ENCODE measurements at regions of chr15 and their contacts with region 1.

Region 1: GRCh38 chr15:70569091-70569621 is 194.2 kb downstream of the UACA start:
- DNase-seq: peak; percentile 71
- H3K4me3 ChIP-seq: no peak overlapping the region
- H3K27ac ChIP-seq: no peak overlapping the region
- H3K4me1 ChIP-seq: no peaks in the 10 kb centered on the region
- H3K27me3 ChIP-seq: peaks cover 2 to 5% of the 10 kb centered on the region in 2 experiments
- CTCF ChIP-seq: peak; percentile 55 to 77
- POLR2A ChIP-seq: no peak

Region 2: DNA sequence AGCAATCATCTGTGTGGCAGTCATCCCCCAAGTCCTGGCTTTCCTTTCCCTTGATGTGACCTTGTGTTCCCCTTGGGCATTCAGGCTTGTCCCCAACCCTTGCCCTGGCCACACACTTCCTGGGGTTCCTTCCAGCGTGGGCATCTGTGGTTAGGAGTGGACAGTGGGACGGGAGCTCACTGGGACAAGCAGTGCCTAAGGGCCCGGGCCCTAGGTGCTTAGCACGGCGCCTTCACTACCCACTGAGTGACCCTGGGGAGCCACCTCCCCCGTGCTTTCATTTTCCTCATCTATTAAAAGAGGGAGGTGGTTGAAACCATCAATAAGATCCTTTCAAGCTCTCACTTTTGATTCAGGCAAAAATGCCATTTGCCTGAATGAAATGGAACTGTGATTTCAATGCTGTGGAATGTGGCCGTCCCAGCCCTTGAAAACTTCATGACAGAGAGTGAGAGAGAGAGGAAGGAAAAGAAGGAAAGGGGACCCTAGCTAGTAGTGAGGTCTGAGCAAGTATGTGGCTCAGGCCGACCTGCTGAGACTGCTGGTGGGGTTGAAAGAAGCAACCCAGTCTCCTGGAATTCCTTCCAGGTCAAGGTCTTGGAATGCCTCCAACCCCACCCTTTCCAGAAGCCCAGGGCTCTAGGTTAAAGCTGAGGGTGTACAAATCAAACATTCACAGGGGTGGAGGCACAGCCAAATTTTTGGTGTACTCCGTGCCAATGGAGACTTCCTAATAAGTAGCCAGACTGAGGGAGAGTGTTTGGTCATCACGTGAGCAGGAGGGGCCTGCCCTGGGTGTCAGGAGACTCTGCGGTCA is 774.3 kb before region 1 on chr15:
- CTCF ChIA-PET with region 1: no interaction called
- POLR2A ChIA-PET with region 1: no interaction called
- dilution Hi-C with region 1: no loop called
- intact Hi-C with region 1: no loop called
- DNase-seq: no peak
- H3K4me3 ChIP-seq: no peak overlapping the region
- H3K27ac ChIP-seq: no peak overlapping the region
- H3K4me1 ChIP-seq: peaks cover 11% of the 10 kb centered on the region
- H3K27me3 ChIP-seq: no peaks in the 10 kb centered on the region
- CTCF ChIP-seq: no peak
- POLR2A ChIP-seq: no peak

Region 3: GRCh38 chr15:70584838-70585706 is 15.9 kb after region 1 on chr15:
- CTCF ChIA-PET with region 1: interaction called, 15 read pairs
- POLR2A ChIA-PET with region 1: no interaction called
- dilution Hi-C with region 1: no loop called
- intact Hi-C with region 1: no loop called
- DNase-seq: no peak
- H3K4me3 ChIP-seq: no peak overlapping the region
- H3K27ac ChIP-seq: no peak overlapping the region
- H3K4me1 ChIP-seq: no peaks in the 10 kb centered on the region
- H3K27me3 ChIP-seq: peaks cover 15 to 27% of the 10 kb centered on the region in 2 experiments
- CTCF ChIP-seq: peak; percentile 56 to 58
- POLR2A ChIP-seq: no peak

Region 4: GRCh38 chr15:70636540-70637165 is 67.5 kb after region 1 on chr15:
- CTCF ChIA-PET with region 1: interaction called, 61 read pairs
- POLR2A ChIA-PET with region 1: no interaction called
- dilution Hi-C with region 1: no loop called
- intact Hi-C with region 1: loop called (anchors 5 kb)
- DNase-seq: peak; percentile 28
- H3K4me3 ChIP-seq: no peak overlapping the region
- H3K27ac ChIP-seq: no peak overlapping the region
- H3K4me1 ChIP-seq: no peaks in the 10 kb centered on the region
- H3K27me3 ChIP-seq: peaks cover 2 to 5% of the 10 kb centered on the region in 2 experiments
- CTCF ChIP-seq: peak; percentile 5 to 27
- POLR2A ChIP-seq: no peak

Region 5: GRCh38 chr15:70650567-70651302 is 81.6 kb after region 1 on chr15:
- CTCF ChIA-PET with region 1: interaction called, 15 read pairs
- POLR2A ChIA-PET with region 1: no interaction called
- dilution Hi-C with region 1: no loop called
- intact Hi-C with region 1: loop called (anchors 5 kb)
- DNase-seq: peak; percentile 96
- H3K4me3 ChIP-seq: no peak overlapping the region
- H3K27ac ChIP-seq: peak overlapping the region; percentile 62
- H3K4me1 ChIP-seq: peaks cover 28% of the 10 kb centered on the region
- H3K27me3 ChIP-seq: no peaks in the 10 kb centered on the region
- CTCF ChIP-seq: no peak
- POLR2A ChIP-seq: no peak

Region 6: GRCh38 chr15:70670680-70671079 is 101.5 kb after region 1 on chr15:
- CTCF ChIA-PET with region 1: interaction called, 17 read pairs
- POLR2A ChIA-PET with region 1: no interaction called
- dilution Hi-C with region 1: no loop called
- intact Hi-C with region 1: no loop called
- DNase-seq: peak; percentile 32
- H3K4me3 ChIP-seq: no peak overlapping the region
- H3K27ac ChIP-seq: no peak overlapping the region
- H3K4me1 ChIP-seq: peaks cover 6% of the 10 kb centered on the region
- H3K27me3 ChIP-seq: no peaks in the 10 kb centered on the region
- CTCF ChIP-seq: no peak
- POLR2A ChIP-seq: no peak

Region 7: GRCh38 chr15:70815644-70816043 is 246.5 kb after region 1 on chr15:
- CTCF ChIA-PET with region 1: interaction called, 34 read pairs
- POLR2A ChIA-PET with region 1: no interaction called
- dilution Hi-C with region 1: no loop called
- intact Hi-C with region 1: loop called (anchors 1 kb)
- DNase-seq: no peak
- H3K4me3 ChIP-seq: no peak overlapping the region
- H3K27ac ChIP-seq: no peak overlapping the region
- H3K4me1 ChIP-seq: peaks cover 9% of the 10 kb centered on the region
- H3K27me3 ChIP-seq: no peaks in the 10 kb centered on the region
- CTCF ChIP-seq: no peak
- POLR2A ChIP-seq: no peak

Region 8: DNA sequence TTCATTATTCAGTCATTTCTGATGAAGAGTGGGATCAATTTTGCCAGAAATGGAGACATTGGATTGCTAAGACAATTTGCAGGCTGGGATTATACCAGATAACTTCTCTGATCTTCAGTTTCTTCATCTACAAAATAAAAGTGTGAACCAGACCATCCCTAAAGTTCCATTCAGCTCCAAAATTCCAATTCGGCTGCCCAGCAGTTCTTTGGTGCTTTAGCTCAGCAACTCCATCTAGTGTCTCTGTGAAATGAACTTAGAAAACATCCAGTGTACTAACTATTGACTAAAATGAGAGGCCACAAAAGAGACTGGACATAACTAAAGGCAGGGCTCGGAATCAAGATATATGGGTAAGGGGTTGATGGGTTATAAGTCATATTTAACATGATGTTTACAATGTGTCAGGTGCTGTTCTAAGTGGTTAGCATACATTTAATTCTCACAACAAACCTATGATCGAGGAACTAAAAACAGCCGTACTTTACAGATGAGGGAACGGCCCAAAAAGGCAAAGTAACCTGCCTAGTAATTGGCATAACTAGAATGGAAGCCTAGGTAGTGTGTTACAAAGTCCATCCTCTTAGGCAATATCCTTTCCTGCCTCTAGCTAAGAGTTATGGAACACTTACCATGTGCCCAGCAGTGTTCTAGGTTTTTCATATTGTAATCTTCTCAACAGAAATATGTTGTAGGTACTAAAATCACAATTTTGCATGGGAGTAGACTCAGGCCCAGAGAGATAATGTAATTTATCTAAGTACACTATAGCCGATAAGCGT is 306.0 kb after region 1 on chr15:
- CTCF ChIA-PET with region 1: interaction called, 35 read pairs
- POLR2A ChIA-PET with region 1: no interaction called
- dilution Hi-C with region 1: no loop called
- intact Hi-C with region 1: no loop called
- DNase-seq: peak; percentile 48
- H3K4me3 ChIP-seq: no peak overlapping the region
- H3K27ac ChIP-seq: no peak overlapping the region
- H3K4me1 ChIP-seq: peaks cover 8% of the 10 kb centered on the region
- H3K27me3 ChIP-seq: no peaks in the 10 kb centered on the region
- CTCF ChIP-seq: peak; percentile 23 to 45
- POLR2A ChIP-seq: no peak